Cardiac septum (tissue), 1 donor: ENCODE measurements at regions of chr1 and their contacts with region 1.

Region 1: DNA sequence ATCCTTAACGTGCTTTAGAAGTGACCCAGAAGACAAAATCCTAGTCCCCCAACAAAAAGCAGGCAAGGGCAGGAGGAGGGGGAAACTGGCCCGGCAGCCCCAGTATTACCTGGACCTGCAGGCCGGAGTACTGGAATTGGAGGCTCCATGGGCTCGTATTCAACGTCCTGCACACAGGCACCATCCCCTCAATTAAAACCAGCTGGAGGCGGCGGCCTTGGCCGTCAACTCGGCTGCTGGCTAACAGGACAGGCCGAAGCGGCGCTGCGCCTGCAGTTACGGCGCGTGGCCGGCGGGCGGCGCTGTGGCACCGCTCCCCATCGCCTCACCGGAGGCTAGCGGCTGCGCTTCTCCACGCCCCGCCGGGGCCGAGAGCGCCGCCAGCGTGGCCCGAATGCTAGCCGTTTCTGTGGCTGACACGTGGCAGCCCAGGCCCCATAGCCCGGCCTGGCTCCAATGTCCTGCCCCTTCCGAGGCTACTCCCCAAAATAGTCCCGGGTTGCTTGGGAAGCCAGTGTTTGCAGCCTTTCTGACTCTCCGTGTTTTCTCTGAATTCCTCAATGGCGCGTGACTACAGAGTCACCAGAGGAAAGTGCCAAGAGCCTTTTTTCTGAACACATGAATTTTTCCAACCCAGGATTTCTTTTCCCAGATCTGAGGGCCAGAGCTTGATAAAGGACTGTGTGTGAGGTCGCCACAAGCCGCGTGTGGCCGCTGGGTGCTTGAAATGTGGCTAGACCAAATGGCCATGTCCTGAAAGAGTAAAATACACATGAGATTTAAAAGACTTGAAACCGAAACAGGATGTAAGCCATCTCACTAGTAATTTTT is 82.5 kb downstream of the HHIPL2 start:
- DNase-seq: peak; percentile 93

Region 2: DNA sequence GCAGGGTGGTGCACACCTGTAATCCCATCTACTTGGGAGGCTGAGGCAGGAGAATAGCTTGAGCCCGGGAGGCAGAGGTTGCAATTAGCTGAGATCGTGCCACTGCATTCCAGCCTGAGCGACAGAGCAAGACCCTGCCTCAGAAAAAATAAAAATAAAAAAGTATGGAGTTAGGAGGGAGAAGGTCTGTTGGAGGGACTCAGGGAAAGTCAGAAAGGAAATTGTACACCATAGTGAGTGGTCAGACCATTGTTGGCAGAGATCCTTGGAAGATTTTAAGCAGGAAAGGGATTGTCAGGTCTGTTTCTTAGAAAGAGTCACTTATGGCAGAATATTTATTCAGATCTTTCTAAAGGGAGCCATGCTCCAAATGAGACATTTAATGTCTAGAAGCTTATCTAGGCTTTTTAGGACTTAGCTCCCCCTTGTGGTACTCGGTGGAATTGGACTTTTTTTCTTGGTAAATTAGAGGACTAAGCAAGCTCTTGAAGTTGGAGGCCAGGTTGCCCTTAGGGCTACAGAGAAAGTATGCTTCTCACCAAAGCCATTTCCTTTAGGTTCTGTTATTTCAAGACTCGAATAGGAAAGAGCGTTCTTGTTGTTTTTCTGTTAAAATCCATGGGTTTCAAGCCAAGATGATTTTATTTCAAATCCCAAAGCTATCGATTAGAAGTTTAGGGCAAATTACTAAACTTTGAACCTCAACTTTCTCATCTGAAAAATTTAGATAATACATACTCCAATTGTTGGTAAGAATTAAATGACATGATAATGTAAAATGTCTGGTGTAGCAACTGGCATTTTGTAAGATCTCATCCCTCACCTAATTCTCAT is 169.0 kb after region 1 on chr1:
- intact Hi-C with region 1: loop called (anchors 1 kb)
- DNase-seq: no peak

Region 3: DNA sequence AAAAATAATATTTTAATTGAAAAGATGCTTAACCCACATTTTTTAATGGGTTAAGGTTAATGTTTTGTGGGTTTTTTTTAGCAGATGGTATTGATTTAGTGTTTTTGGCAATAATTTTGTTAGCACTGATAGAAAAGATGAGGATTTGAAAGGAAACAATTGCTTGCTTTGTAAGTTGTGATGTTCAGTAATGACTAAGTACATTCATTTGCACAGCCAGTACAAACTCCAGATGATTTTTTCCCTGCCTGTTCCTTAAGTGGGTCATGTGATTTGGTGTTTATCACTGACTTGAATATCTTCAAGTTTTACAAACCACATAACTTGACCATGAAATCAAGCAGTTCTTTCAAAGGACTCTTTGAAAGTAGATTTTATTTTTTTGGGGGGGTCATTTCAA is 364.4 kb after region 1 on chr1:
- intact Hi-C with region 1: no loop called
- DNase-seq: no peak